Psoas muscle (tissue), 8 donors: ENCODE measurements at regions of chr16 and their contacts with region 1.

Region 1: GRCh38 chr16:11639925-11640899 is 28.0 kb upstream of the SNN start:
- DNase-seq: peak; percentile 86 to 89
- ATAC-seq: peak; percentile 90 to 94 (median 92)
- H3K4me3 ChIP-seq: peak overlapping the region; percentile 35
- H3K27ac ChIP-seq: peak overlapping the region; percentile 93
- H3K4me1 ChIP-seq: peaks cover 23% of the 10 kb centered on the region
- H3K27me3 ChIP-seq: no peaks in the 10 kb centered on the region
- CTCF ChIP-seq: no peak

Region 2: DNA sequence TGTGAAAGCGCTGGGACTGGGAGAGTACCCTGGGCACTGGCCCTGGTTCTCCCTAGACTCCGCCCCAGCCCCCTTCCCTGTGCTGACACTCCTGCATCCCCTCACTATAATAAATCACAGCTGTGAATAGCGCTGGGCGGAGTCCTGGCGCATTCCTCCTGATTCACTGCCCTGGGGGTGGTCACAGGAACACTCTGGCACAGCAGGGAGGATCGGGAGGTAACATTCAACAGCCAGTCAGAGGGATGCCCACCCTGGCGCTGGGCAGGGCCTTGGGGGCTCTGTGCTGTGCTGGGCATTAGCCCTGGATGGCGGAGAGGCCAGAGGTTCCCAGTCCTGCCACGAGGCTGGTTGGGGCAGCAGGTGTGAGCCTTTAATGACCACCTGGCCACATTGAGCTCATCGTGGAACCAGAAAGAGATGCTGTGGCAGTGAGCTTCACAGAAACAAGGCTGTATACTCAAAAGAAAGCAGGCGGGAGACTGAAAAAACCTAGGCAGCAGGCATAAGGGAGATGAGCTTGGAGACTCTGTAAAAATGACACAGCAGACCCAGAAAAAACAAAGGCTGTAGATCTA is 249.2 kb before region 1 on chr16:
- intact Hi-C with region 1: loop called (anchors 5 kb)
- DNase-seq: no peak
- ATAC-seq: no peak
- H3K4me3 ChIP-seq: no peak overlapping the region
- H3K27ac ChIP-seq: no peak overlapping the region
- H3K4me1 ChIP-seq: no peaks in the 10 kb centered on the region
- H3K27me3 ChIP-seq: no peaks in the 10 kb centered on the region
- CTCF ChIP-seq: no peak

Region 3: GRCh38 chr16:11497851-11498289 is 142.3 kb before region 1 on chr16:
- intact Hi-C with region 1: loop called in 1 of 2 experiments (anchors 1 kb)
- DNase-seq: peak in 1 of 2 donors; percentile 41
- ATAC-seq: no peak
- H3K4me3 ChIP-seq: no peak overlapping the region
- H3K27ac ChIP-seq: peak overlapping the region; percentile 94
- H3K4me1 ChIP-seq: peaks cover 40% of the 10 kb centered on the region
- H3K27me3 ChIP-seq: no peaks in the 10 kb centered on the region
- CTCF ChIP-seq: no peak

Region 4: DNA sequence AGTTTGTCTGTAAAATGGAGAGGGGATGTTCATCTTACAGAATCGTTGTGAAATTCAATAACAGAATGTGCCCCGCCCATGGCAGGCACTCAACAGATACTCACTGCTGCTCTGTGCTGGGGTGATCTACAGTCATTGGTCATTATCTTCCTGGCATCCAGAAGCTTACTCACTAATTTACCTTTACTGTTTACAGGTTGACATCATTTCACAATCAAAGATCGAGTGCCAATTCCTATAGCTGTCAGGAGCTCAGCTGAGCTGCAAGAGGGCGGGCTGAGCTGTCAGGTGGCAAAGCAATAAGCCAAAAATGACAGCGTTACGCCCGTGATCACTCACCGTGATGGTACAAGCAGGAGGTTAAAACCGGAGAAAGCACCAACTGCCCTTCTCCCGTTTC is 104.7 kb before region 1 on chr16:
- intact Hi-C with region 1: loop called (anchors 5 kb)
- DNase-seq: no peak
- ATAC-seq: no peak
- H3K4me3 ChIP-seq: no peak overlapping the region
- H3K27ac ChIP-seq: no peak overlapping the region
- H3K4me1 ChIP-seq: no peaks in the 10 kb centered on the region
- H3K27me3 ChIP-seq: no peaks in the 10 kb centered on the region
- CTCF ChIP-seq: no peak

Region 5: GRCh38 chr16:11586856-11587642 is 53.2 kb before region 1 on chr16 and contains the start of gene LITAF:
- intact Hi-C with region 1: loop called in 1 of 2 experiments (anchors 5 kb)
- DNase-seq: peak; percentile 68 to 72
- ATAC-seq: peak; percentile 73 to 79 (median 78)
- H3K4me3 ChIP-seq: peak within 1 kb of the TSS; percentile 80
- H3K27ac ChIP-seq: peak within 1 kb of the TSS; percentile 82
- H3K4me1 ChIP-seq: peaks cover 10% of the 10 kb centered on the region
- H3K27me3 ChIP-seq: peaks cover 0 to 8% (median 5%) of the 10 kb centered on the region in 3 donors
- CTCF ChIP-seq: no peak
- total RNA-seq, gene LITAF: 8.5 to 60.2 (median 18.5) TPM

Region 6: DNA sequence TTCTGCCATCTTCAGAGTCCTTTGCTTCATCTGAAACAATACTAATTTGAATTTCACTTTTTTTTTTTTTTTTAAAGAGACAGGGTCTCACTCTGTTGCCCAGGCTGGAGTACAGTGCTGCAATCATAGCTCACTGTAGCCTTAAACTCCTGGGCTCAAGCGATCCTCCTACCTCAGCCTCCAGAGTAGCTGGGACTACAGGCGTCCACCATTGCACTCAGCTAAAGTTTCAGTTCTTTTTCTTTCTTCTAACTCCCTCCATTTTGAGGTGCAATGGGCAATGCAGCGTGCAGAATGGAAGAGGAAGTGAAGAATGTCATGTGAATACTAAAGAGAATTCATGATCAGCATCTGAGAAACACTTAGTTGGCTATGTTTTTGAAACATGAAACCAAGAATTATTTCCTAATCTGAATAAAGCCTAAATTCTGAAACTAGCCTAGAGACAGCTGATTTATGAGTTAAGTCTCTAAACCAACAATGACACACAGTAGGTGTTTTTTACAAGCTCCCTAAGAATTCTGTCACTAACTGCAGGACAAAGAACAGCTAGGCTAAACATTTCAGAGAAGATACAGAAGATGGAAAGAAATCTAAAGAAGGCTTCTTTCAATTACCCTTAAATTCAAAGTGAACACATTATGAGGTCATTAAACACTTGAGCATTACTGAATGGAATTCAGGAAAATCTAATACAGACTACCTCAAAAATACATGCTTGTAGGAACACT is 49.0 kb after region 1 on chr16:
- intact Hi-C with region 1: no loop called
- DNase-seq: no peak
- ATAC-seq: peak in 1 of 4 donors; percentile 23
- H3K4me3 ChIP-seq: no peak overlapping the region
- H3K27ac ChIP-seq: peak overlapping the region; percentile 44
- H3K4me1 ChIP-seq: peaks cover 47% of the 10 kb centered on the region
- H3K27me3 ChIP-seq: no peaks in the 10 kb centered on the region
- CTCF ChIP-seq: no peak

Region 7: DNA sequence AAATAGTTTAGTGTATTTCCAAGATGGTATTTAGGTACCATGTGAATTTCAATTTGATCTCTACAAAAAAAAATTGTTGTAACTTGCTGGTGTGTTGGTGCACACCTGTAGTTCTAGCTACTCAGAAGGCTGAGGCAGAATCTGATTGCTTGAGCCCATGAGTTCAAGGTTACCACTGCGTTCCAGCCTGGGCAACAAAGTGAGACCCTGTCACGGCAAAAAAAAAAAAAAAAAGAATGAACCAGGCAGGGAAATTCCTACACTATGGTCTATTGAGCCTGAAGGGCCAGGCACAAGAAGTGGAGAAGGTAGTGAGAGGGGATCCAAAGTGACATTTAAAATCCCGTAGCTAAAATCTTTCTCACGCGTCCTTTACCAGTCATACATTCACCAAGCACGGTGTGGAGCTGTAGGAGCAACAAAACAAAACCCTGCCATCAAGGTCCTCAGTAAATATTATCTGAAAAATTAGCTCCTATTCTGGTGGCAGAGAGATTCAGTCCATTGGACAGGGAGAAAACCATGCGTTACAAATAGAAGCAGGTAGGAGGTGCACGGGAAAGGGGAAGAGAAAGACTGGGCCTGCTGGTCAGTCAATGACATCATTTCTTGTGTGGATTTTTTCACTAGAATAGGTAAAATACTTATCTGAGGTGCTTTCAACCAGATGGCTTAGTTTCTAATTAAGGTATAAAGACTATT is 75.2 kb after region 1 on chr16:
- intact Hi-C with region 1: loop called (anchors 5 to 10 kb)
- DNase-seq: no peak
- ATAC-seq: no peak
- H3K4me3 ChIP-seq: no peak overlapping the region
- H3K27ac ChIP-seq: peak overlapping the region; percentile 44
- H3K4me1 ChIP-seq: peaks cover 42% of the 10 kb centered on the region
- H3K27me3 ChIP-seq: no peaks in the 10 kb centered on the region
- CTCF ChIP-seq: no peak